ENCODE measurements at regions of chr11 and their contacts with region 1.

Region 1: GRCh38 chr11:6531267-6531752 is 34.2 kb downstream of the DNHD1 start:
- DNase-seq: peak; percentile 53
- CTCF ChIP-seq: peak; percentile 53

Region 2: GRCh38 chr11:6505577-6506240 is 25.6 kb before region 1 on chr11:
- CTCF ChIA-PET with region 1: interaction called, 10 read pairs
- POLR2A ChIA-PET with region 1: no interaction called
- DNase-seq: peak; percentile 42
- CTCF ChIP-seq: peak; percentile 77

Region 3: GRCh38 chr11:6520265-6520664 is 11.0 kb before region 1 on chr11:
- CTCF ChIA-PET with region 1: interaction called, 13 read pairs
- POLR2A ChIA-PET with region 1: no interaction called
- DNase-seq: no peak
- CTCF ChIP-seq: no peak

Region 4: DNA sequence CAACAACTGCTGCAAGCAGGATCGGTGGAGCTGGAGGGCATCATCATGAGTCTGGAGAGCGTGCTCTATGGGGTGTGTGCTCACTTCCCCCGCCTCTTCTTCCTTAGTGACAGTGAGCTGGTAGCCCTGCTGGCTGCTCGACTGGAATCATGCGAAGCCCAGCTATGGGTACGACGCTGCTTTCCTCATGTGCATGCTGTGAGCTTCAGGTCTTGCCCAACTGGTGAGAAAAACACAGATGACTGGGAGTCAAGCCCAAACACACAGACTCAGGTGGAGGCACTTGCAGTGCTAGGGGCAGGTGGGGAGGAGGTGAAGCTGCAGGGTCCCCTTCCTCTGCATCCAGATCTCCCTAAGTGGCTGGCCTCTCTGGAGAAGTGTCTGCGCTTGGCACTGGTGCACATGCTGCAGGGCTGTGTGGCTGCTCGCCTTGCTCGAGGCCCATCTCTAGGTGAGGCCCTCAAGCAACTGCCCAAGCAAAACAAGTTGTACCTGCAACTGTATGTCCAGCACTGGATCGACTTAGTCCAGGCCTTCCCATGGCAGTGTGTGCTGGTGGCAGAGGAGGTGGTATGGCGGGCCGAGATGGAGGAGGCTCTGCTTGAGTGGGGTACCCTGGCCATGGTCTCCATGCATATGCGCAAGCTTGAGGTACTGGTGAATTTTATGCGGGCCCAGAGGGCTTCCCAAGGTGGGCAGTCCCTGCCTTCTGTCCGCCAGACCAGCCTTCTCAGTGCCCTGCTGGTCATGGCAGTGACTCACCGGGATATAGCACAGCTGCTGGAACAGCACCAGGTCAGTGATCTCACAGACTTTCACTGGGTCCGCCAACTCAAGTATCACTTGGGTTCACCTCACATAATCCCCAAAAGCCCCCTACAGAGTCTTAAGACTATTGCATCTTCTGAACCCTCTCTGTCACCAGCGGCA is 13.9 kb after region 1 on chr11:
- CTCF ChIA-PET with region 1: interaction called, 73 read pairs
- POLR2A ChIA-PET with region 1: no interaction called
- DNase-seq: no peak
- CTCF ChIP-seq: no peak

Region 5: GRCh38 chr11:6705905-6706535 is 174.7 kb after region 1 on chr11:
- CTCF ChIA-PET with region 1: interaction called, 16 read pairs
- POLR2A ChIA-PET with region 1: no interaction called
- DNase-seq: peak; percentile 47
- CTCF ChIP-seq: peak; percentile 82

Measured in GM10248 (cell line).